Naive thymus-derived CD4-positive, alpha-beta T cell (primary cell): ENCODE measurements at regions of chr19 and their contacts with region 1.

Region 1: DNA sequence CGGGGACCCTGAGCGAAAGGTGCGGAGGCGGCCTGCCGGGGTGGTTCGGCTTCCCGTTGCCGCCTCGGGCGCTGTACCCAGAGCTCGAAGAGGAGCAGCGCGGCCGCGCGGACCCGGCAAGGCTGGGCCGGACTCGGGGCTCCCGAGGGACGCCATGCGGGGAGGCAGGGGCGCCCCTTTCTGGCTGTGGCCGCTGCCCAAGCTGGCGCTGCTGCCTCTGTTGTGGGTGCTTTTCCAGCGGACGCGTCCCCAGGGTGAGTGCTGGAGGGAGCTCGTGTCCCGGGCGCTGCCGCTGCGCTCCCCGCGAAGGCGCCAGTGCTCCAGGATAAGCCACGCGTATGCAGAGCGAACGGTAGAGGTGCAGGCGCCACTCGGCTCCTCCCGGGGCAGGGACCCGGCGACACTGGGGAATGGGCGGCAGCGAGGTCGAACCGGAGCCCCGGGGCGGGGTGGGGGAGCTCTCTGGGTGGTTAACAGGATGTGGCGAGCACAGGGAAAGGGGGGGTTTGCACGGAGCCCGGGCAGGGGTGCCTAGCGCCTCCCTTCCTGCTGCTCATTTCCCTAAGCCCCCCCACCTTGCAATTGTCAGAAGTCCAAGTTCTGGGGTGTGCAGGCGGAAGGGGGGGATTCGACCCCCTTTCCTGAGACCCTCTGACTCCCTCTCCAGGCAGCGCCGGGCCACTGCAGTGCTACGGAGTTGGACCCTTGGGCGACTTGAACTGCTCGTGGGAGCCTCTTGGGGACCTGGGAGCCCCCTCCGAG is at the start of gene IL27RA:
- DNase-seq: peak; percentile 71 to 89 (median 87)
- ATAC-seq: peak; percentile 85
- H3K4me3 ChIP-seq: peak within 1 kb of the TSS; percentile 98
- H3K4me3 Mint-ChIP-seq: peak within 1 kb of the TSS; percentile 88 to 97 (median 94)
- H3K27ac ChIP-seq: peak within 1 kb of the TSS; percentile 99
- H3K27ac Mint-ChIP-seq: peak within 1 kb of the TSS; percentile 92 to 97 (median 95)
- H3K4me1 ChIP-seq: peaks cover 16% of the 10 kb centered on the region in 2 donors
- H3K4me1 Mint-ChIP-seq: peaks cover 21 to 52% (median 36%) of the 10 kb centered on the region in 7 donors
- H3K27me3 ChIP-seq: no peaks in the 10 kb centered on the region
- H3K27me3 Mint-ChIP-seq: peaks cover 0 to 1% (median 0%) of the 10 kb centered on the region in 5 donors
- total RNA-seq, gene IL27RA: 32.1 to 118 (median 83.2) TPM

Region 2: DNA sequence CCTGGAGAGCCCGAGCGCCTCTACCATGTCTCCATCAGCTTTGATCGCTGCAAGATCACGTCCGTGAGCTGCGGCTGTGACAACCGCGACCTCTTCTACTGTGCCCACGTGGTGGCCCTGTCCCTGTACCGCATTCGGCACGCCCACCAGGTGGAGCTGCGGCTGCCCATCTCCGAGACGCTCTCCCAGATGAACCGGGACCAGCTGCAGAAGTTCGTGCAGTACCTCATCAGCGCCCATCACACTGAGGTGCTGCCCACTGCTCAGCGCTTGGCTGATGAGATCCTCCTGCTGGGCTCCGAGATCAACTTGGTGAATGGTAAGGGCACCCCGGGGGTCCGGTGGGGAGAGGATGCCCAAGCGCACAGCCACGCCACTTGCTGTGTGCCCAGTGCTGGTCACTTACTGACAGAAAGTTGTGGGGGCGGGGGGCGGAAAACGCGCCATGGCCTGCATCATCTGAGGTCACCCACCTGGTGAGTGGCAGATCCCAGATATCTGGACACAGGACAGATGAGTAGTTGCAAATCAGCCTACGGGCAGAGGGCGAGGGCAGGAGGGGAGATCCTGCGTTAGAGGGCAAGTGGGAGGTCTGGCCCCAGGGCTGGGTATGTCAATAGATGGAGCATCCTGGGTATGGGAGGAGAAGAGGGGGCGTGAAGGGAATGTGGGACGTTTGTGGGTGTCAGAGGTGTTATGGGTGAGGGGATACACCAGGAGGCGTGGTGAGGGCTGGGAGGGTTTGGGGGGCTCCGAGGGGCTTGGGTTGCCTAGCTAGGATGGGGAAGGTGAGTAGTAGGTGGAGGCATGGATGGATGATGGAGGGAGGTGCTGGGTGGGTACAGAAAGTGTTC is 226.8 kb before region 1 on chr19:
- CTCF ChIA-PET with region 1: no interaction called
- POLR2A ChIA-PET with region 1: no interaction called
- intact Hi-C with region 1: no loop called
- DNase-seq: no peak
- ATAC-seq: no peak
- H3K4me3 ChIP-seq: no peak overlapping the region
- H3K4me3 Mint-ChIP-seq: no peak overlapping the region
- H3K27ac ChIP-seq: no peak overlapping the region
- H3K27ac Mint-ChIP-seq: peak overlapping the region in 1 of 9 donors; percentile 74
- H3K4me1 ChIP-seq: no peaks in the 10 kb centered on the region
- H3K4me1 Mint-ChIP-seq: peaks cover 0 to 6% (median 3%) of the 10 kb centered on the region in 7 donors
- H3K27me3 ChIP-seq: no peaks in the 10 kb centered on the region
- H3K27me3 Mint-ChIP-seq: no peaks in the 10 kb centered on the region

Region 3: GRCh38 chr19:13905938-13906904 is 125.7 kb before region 1 on chr19 and contains the starts of genes BRME1 and CC2D1A:
- CTCF ChIA-PET with region 1: interaction called, 5 read pairs
- POLR2A ChIA-PET with region 1: interaction called, 5 read pairs
- intact Hi-C with region 1: loop called (anchors 1 to 5 kb)
- DNase-seq: peak; percentile 87 to 94 (median 92)
- ATAC-seq: peak; percentile 100
- H3K4me3 ChIP-seq: peak within 1 kb of the TSS; percentile 84
- H3K4me3 Mint-ChIP-seq: peak within 1 kb of the TSS; percentile 84 to 94 (median 88)
- H3K27ac ChIP-seq: peak within 1 kb of the TSS; percentile 77
- H3K27ac Mint-ChIP-seq: peak within 1 kb of the TSS; percentile 83 to 94 (median 91)
- H3K4me1 ChIP-seq: peaks cover 12% of the 10 kb centered on the region in 2 donors
- H3K4me1 Mint-ChIP-seq: peaks cover 12 to 29% (median 16%) of the 10 kb centered on the region in 7 donors
- H3K27me3 ChIP-seq: no peaks in the 10 kb centered on the region
- H3K27me3 Mint-ChIP-seq: no peaks in the 10 kb centered on the region
- total RNA-seq, gene BRME1: 1.8 to 13.7 (median 2.9) TPM
- total RNA-seq, gene CC2D1A: 21.0 to 33.1 (median 29.8) TPM

Region 4: GRCh38 chr19:13959962-13960862 is 71.7 kb before region 1 on chr19:
- CTCF ChIA-PET with region 1: no interaction called
- POLR2A ChIA-PET with region 1: interaction called, 59 read pairs
- intact Hi-C with region 1: loop called in 1 of 2 experiments (anchors 2 kb)
- DNase-seq: peak in 2 of 9 donors; percentile 29 to 37
- ATAC-seq: peak; percentile 61
- H3K4me3 ChIP-seq: no peak overlapping the region
- H3K4me3 Mint-ChIP-seq: no peak overlapping the region
- H3K27ac ChIP-seq: no peak overlapping the region
- H3K27ac Mint-ChIP-seq: peak overlapping the region in 3 of 9 donors; percentile 31 to 75 (median 43)
- H3K4me1 ChIP-seq: no peaks in the 10 kb centered on the region
- H3K4me1 Mint-ChIP-seq: peaks cover 0 to 5% (median 3%) of the 10 kb centered on the region in 7 donors
- H3K27me3 ChIP-seq: no peaks in the 10 kb centered on the region
- H3K27me3 Mint-ChIP-seq: no peaks in the 10 kb centered on the region

Region 5: DNA sequence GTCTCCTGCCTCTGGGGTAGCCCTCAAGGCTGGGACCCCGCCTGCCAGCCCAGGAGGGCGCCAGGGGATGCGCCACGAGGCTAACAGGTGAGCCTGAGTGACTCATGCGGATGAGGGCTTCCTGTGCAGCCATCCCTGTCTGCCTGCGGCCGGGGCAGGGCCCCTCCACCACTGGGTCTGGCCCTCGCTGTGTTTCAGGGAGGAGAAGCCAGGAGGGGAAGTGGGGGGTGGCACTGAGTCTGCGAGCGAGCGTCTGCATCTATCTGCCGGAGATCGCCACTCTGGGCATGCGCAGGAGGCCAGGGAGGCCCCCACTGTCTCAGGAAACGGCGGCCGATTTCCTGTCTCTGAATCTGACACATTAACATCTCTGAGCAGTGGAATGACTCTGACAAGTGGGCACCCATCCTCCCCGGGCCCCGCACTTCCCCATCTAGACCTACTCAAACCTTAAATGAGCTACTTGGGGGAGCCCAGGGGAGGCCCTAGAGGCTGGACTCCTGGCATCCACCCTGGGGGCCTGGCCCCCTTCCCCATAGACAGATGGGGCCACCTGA is 45.5 kb before region 1 on chr19:
- CTCF ChIA-PET with region 1: interaction called, 6 read pairs
- POLR2A ChIA-PET with region 1: interaction called, 55 read pairs
- intact Hi-C with region 1: loop called (anchors 1 kb)
- DNase-seq: peak; percentile 94 to 98 (median 97)
- ATAC-seq: peak; percentile 94
- H3K4me3 ChIP-seq: peak overlapping the region; percentile 48
- H3K4me3 Mint-ChIP-seq: peak overlapping the region; percentile 61 to 85 (median 77)
- H3K27ac ChIP-seq: peak overlapping the region; percentile 97
- H3K27ac Mint-ChIP-seq: peak overlapping the region; percentile 92 to 99 (median 96)
- H3K4me1 ChIP-seq: peaks cover 39 to 65% of the 10 kb centered on the region in 2 donors
- H3K4me1 Mint-ChIP-seq: peaks cover 48 to 89% (median 66%) of the 10 kb centered on the region in 7 donors
- H3K27me3 ChIP-seq: no peaks in the 10 kb centered on the region
- H3K27me3 Mint-ChIP-seq: no peaks in the 10 kb centered on the region

Region 6: GRCh38 chr19:14015524-14016035 is 16.3 kb before region 1 on chr19:
- CTCF ChIA-PET with region 1: interaction called, 3 read pairs
- POLR2A ChIA-PET with region 1: interaction called, 162 read pairs
- intact Hi-C with region 1: no loop called
- DNase-seq: no peak
- ATAC-seq: no peak
- H3K4me3 ChIP-seq: no peak overlapping the region
- H3K4me3 Mint-ChIP-seq: no peak overlapping the region
- H3K27ac ChIP-seq: no peak overlapping the region
- H3K27ac Mint-ChIP-seq: no peak overlapping the region
- H3K4me1 ChIP-seq: no peaks in the 10 kb centered on the region
- H3K4me1 Mint-ChIP-seq: peaks cover 0 to 12% (median 0%) of the 10 kb centered on the region in 7 donors
- H3K27me3 ChIP-seq: no peaks in the 10 kb centered on the region
- H3K27me3 Mint-ChIP-seq: peaks cover 0 to 3% (median 0%) of the 10 kb centered on the region in 5 donors

Region 7: DNA sequence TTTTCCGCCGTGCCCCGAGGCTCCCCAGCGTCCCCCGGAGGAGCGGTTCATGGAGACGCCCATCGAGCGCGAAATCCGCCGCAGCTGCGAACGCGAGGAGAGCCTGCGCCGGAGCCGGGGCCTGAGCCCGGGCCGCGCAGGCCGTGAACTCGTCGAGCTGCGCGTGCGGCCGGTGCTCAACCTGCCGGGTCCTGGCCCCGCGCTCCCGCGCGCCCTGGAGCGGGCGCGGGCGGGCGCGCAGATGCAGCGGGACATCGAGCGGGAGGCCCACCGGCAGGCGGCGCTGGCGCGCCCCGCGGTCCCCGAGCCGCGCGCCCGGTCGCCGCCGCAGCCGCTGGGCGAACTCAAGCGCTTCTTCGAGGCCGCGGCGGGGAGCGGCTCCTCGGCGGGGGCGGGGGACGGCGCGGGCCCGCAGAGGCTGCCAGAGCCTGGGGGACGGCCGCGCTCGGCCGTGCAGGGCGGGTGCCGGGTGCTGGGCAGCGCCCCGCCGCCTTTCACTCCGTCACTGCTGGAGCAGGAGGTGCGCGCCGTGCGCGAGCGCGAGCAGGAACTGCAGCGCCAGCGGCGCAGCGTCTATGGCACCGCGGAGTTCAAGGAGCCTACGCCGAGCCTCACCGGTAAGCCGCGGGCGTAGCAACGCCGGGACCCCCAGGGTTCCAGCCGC is 41.5 kb after region 1 on chr19:
- CTCF ChIA-PET with region 1: interaction called, 3 read pairs
- POLR2A ChIA-PET with region 1: interaction called, 10 read pairs
- intact Hi-C with region 1: loop called in 1 of 2 experiments (anchors 1 kb)
- DNase-seq: peak; percentile 65 to 91 (median 87)
- ATAC-seq: peak; percentile 86
- H3K4me3 ChIP-seq: peak overlapping the region; percentile 91
- H3K4me3 Mint-ChIP-seq: peak overlapping the region; percentile 87 to 99 (median 93)
- H3K27ac ChIP-seq: peak overlapping the region; percentile 50
- H3K27ac Mint-ChIP-seq: peak overlapping the region in 7 of 9 donors; percentile 62 to 89 (median 78)
- H3K4me1 ChIP-seq: peaks cover 9 to 18% of the 10 kb centered on the region in 2 donors
- H3K4me1 Mint-ChIP-seq: peaks cover 7 to 24% (median 10%) of the 10 kb centered on the region in 7 donors
- H3K27me3 ChIP-seq: no peaks in the 10 kb centered on the region
- H3K27me3 Mint-ChIP-seq: peaks cover 0 to 10% (median 0%) of the 10 kb centered on the region in 5 donors

Region 8: GRCh38 chr19:15759962-15760565 is 1728.2 kb after region 1 on chr19:
- CTCF ChIA-PET with region 1: no interaction called
- POLR2A ChIA-PET with region 1: no interaction called
- intact Hi-C with region 1: no loop called
- DNase-seq: no peak
- ATAC-seq: no peak
- H3K4me3 ChIP-seq: no peak overlapping the region
- H3K4me3 Mint-ChIP-seq: no peak overlapping the region
- H3K27ac ChIP-seq: no peak overlapping the region
- H3K27ac Mint-ChIP-seq: no peak overlapping the region
- H3K4me1 ChIP-seq: no peaks in the 10 kb centered on the region
- H3K4me1 Mint-ChIP-seq: peaks cover 0 to 10% (median 0%) of the 10 kb centered on the region in 7 donors
- H3K27me3 ChIP-seq: peaks cover 6 to 15% of the 10 kb centered on the region in 2 donors
- H3K27me3 Mint-ChIP-seq: peaks cover 49 to 72% (median 71%) of the 10 kb centered on the region in 5 donors